IMR-90 (cell line): ENCODE measurements at regions of chrX and their contacts with region 1.

Region 1: GRCh38 chrX:37986893-37987292 is 19.5 kb upstream of the SYTL5 start:
- DNase-seq: peak; percentile 31
- ATAC-seq: peak; percentile 69
- H3K4me3 ChIP-seq: no peak overlapping the region
- H3K27ac ChIP-seq: no peak overlapping the region
- H3K4me1 ChIP-seq: no peaks in the 10 kb centered on the region
- H3K27me3 ChIP-seq: peaks cover 2% of the 10 kb centered on the region
- CTCF ChIP-seq: no peak
- POLR2A ChIP-seq: no peak
- RAD21 ChIP-seq: no peak

Region 2: DNA sequence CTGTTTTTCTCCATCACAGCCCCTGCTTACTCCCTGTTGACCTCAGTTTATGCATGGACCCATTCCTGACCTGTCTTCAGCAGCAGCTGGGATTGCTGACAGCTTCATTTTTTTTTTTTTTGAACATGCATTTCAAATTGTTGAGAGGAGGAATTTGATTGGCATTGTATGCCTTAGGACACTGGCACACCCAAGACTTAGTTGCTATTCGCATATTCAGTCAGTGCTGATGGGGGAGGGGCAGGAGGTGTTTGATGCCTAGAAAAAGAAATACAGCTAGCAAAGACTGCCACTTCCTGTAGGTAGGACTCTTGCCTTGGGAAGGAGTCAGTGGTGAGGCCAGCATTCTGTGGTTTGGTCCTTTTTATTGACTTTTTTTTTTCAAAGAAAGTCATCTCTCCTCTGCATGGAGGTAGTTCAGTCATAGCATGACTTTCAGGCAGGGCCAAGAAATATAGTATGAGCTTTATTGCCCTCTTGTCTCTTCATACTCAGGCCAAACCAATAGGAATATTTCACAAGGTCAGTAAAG is 334.9 kb before region 1 on chrX:
- CTCF ChIA-PET with region 1: no interaction called
- POLR2A ChIA-PET with region 1: no interaction called
- dilution Hi-C with region 1: no loop called
- in situ Hi-C with region 1: no loop called
- intact Hi-C with region 1: loop called (anchors 10 kb)
- DNase-seq: no peak
- ATAC-seq: no peak
- H3K4me3 ChIP-seq: no peak overlapping the region
- H3K27ac ChIP-seq: no peak overlapping the region
- H3K4me1 ChIP-seq: no peaks in the 10 kb centered on the region
- H3K27me3 ChIP-seq: peaks cover 3% of the 10 kb centered on the region
- CTCF ChIP-seq: no peak
- POLR2A ChIP-seq: no peak
- RAD21 ChIP-seq: no peak

Region 3: GRCh38 chrX:38166478-38167083 is 179.7 kb after region 1 on chrX:
- CTCF ChIA-PET with region 1: no interaction called
- POLR2A ChIA-PET with region 1: no interaction called
- dilution Hi-C with region 1: no loop called
- in situ Hi-C with region 1: no loop called
- intact Hi-C with region 1: no loop called
- DNase-seq: peak; percentile 26
- ATAC-seq: no peak
- H3K4me3 ChIP-seq: no peak overlapping the region
- H3K27ac ChIP-seq: no peak overlapping the region
- H3K4me1 ChIP-seq: no peaks in the 10 kb centered on the region
- H3K27me3 ChIP-seq: no peaks in the 10 kb centered on the region
- CTCF ChIP-seq: peak; percentile 71
- POLR2A ChIP-seq: no peak
- RAD21 ChIP-seq: peak; percentile 57